ENCODE measurements at regions of chr14 and their contacts with region 1.

Region 1: DNA sequence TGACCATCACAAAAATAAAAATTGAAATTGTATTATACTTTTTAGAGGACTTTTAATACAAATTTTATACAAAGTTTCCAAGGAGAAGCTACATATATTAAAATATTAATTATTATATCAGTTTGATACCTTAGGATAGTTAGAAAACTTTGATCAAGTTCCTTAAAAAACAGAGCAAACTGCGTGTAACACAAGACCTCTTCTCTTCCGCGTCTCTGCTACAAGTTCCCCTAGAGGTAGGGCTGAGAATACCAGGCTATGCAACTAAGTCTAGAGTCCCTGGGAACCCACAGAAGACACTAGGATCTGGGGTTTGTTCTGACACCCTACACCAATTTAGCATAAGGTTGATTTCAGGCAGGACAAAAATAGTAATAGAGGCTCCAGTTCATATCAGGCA is 319.0 kb downstream of the FOXG1 start:
- DNase-seq: peak; percentile 39
- ATAC-seq: peak; percentile 99
- H3K4me3 ChIP-seq: no peak overlapping the region
- H3K27ac ChIP-seq: no peak overlapping the region
- H3K4me1 ChIP-seq: no peaks in the 10 kb centered on the region
- H3K27me3 ChIP-seq: no peaks in the 10 kb centered on the region
- CTCF ChIP-seq: 0 out of 2 replicates have a peak, but pooled peaks have one; percentile 9
- EP300 ChIP-seq: no peak
- POLR2A ChIP-seq: no peak
- RAD21 ChIP-seq: no peak

Region 2: GRCh38 chr14:28999656-29000055 is 85.9 kb before region 1 on chr14:
- CTCF ChIA-PET with region 1: no interaction called
- POLR2A ChIA-PET with region 1: no interaction called
- in situ Hi-C with region 1: no loop called
- intact Hi-C with region 1: no loop called
- DNase-seq: no peak
- ATAC-seq: no peak
- H3K4me3 ChIP-seq: no peak overlapping the region
- H3K27ac ChIP-seq: no peak overlapping the region
- H3K4me1 ChIP-seq: no peaks in the 10 kb centered on the region
- H3K27me3 ChIP-seq: no peaks in the 10 kb centered on the region
- CTCF ChIP-seq: no peak
- EP300 ChIP-seq: no peak
- POLR2A ChIP-seq: no peak
- RAD21 ChIP-seq: no peak

Region 3: GRCh38 chr14:29028973-29029582 is 56.5 kb before region 1 on chr14:
- CTCF ChIA-PET with region 1: no interaction called
- POLR2A ChIA-PET with region 1: no interaction called
- in situ Hi-C with region 1: no loop called
- intact Hi-C with region 1: loop called (anchors 2 kb)
- DNase-seq: peak; percentile 99
- ATAC-seq: peak; percentile 100
- H3K4me3 ChIP-seq: peak overlapping the region in 2 of 3 experiments; percentile 20 to 51; a peak in 4 of 6 replicates
- H3K27ac ChIP-seq: peak overlapping the region; percentile 69
- H3K4me1 ChIP-seq: peaks cover 38% of the 10 kb centered on the region
- H3K27me3 ChIP-seq: no peaks in the 10 kb centered on the region
- CTCF ChIP-seq: 0 out of 2 replicates have a peak, but pooled peaks have one; percentile 19
- EP300 ChIP-seq: peak; percentile 94 to 96
- POLR2A ChIP-seq: 0 out of 4 replicates have a peak, but pooled peaks of 1 of the 2 experiments have one; percentile 36
- RAD21 ChIP-seq: peak; percentile 49